ENCODE measurements at regions of chr9 and their contacts with region 1.

Region 1: DNA sequence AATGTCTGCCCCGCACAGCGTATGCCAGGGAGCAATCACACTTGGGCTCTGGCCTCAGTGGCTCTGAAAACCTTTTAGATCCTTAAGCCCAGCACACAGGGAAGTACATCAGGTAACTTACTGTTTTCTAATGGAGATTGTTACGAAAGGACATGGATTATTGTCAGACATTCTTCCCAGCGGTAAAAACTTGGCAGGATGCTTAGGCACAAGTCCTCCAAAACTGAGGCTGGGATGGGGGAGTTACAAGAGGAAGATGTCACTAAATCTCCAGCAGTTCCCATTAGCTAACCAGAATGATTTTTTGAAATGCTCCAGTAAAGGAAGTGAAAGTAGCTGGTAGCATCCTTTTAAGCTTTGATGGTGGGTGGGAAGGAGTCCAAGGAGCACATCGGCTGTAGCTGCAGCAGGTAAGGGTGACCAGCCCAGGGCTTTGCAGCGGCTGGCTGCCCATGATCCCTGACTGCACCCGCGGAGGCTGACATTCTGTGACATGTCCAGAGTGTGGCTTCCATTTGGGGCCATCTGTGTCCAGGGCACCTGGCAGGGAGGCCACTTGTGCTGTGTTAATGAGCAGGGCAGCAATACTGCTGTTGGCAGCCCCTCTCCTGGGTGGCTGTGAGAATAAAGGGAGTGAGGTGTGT is 165.8 kb downstream of the GADD45G start:
- DNase-seq: no peak
- H3K4me3 ChIP-seq: no peak overlapping the region
- H3K27ac ChIP-seq: no peak overlapping the region
- H3K4me1 ChIP-seq: no peaks in the 10 kb centered on the region
- H3K27me3 ChIP-seq: no peaks in the 10 kb centered on the region
- CTCF ChIP-seq: no peak

Region 2: GRCh38 chr9:89634995-89635742 is 135.5 kb before region 1 on chr9:
- CTCF ChIA-PET with region 1: no interaction called
- dilution Hi-C with region 1: loop called (anchors 10 kb)
- in situ Hi-C with region 1: no loop called
- intact Hi-C with region 1: no loop called
- DNase-seq: peak; percentile 88
- H3K4me3 ChIP-seq: no peak overlapping the region
- H3K27ac ChIP-seq: no peak overlapping the region
- H3K4me1 ChIP-seq: peaks cover 19% of the 10 kb centered on the region
- H3K27me3 ChIP-seq: no peaks in the 10 kb centered on the region
- CTCF ChIP-seq: no peak

Measured in mammary epithelial cell (primary cell).